Esophagus muscularis mucosa (tissue), 4 donors: ENCODE measurements at regions of chr10 and their contacts with region 1.

Region 1: DNA sequence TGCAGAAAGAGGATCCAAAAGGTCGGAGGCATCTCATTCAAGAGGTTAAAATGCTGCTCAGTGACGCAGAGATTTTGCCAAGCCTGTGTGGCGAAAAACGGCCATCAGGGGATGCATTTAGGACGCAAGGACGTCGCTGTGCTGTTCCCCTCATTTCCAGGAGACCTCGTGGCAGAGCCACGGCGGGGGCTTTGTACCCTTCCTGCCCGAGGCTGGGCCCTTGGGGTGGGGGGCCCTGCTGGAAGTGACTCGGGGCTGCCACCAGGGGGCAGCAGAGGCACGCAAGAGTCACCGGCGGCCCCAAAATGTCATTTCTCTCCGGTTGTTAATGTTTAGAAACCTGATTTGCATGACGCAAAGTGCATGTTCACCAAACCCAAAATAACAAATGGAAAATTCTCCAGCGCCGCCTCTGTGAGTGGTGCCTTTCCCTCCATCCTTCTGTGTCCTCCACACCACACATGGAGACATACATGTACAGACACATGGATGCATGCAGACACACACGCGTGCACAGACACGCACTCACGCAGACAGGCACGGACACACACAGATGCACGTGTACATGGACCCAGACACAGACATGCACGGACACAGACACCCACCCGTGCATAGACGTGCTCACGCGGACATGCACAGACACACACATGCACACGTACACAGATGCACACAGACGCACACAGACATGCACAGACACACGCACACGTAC is 51.0 kb upstream of the NKX6-2 start:
- DNase-seq: no peak
- H3K4me3 ChIP-seq: no peak overlapping the region
- H3K27ac ChIP-seq: no peak overlapping the region
- H3K4me1 ChIP-seq: peaks cover 0 to 12% (median 4%) of the 10 kb centered on the region in 4 donors
- H3K27me3 ChIP-seq: peaks cover 0 to 76% (median 14%) of the 10 kb centered on the region in 4 donors
- CTCF ChIP-seq: peak; percentile 84 to 97 (median 94)
- EP300 ChIP-seq: no peak
- POLR2A ChIP-seq: no peak

Region 2: DNA sequence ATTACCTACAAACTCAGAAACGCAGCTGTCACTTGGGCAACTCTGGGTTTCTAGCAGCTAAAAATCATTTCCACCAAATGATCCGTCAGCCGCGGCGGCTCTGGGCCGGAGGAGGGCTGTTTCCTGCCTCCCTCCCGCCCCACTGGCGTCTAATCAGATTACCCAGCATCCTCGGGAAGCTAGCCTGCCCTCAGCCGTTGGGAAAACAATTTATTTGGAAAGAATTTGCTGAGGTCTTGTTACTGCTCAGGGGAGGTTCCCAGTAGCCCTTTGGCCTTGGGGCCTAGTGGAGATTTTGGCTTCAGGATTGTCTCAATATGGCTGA is 185.8 kb after region 1 on chr10:
- intact Hi-C with region 1: no loop called
- DNase-seq: no peak
- H3K4me3 ChIP-seq: no peak overlapping the region
- H3K27ac ChIP-seq: no peak overlapping the region
- H3K4me1 ChIP-seq: peaks cover 0 to 8% (median 4%) of the 10 kb centered on the region in 4 donors
- H3K27me3 ChIP-seq: peaks cover 0 to 66% (median 0%) of the 10 kb centered on the region in 4 donors
- CTCF ChIP-seq: no peak
- EP300 ChIP-seq: no peak
- POLR2A ChIP-seq: no peak

Region 3: GRCh38 chr10:133124357-133125211 is 287.6 kb after region 1 on chr10:
- intact Hi-C with region 1: loop called (anchors 2 kb)
- DNase-seq: no peak
- H3K4me3 ChIP-seq: no peak overlapping the region
- H3K27ac ChIP-seq: no peak overlapping the region
- H3K4me1 ChIP-seq: peaks cover 0 to 6% (median 3%) of the 10 kb centered on the region in 4 donors
- H3K27me3 ChIP-seq: peaks cover 0 to 59% (median 2%) of the 10 kb centered on the region in 4 donors
- CTCF ChIP-seq: peak in 2 of 3 experiments; percentile 47 to 54
- EP300 ChIP-seq: no peak
- POLR2A ChIP-seq: no peak

Region 4: DNA sequence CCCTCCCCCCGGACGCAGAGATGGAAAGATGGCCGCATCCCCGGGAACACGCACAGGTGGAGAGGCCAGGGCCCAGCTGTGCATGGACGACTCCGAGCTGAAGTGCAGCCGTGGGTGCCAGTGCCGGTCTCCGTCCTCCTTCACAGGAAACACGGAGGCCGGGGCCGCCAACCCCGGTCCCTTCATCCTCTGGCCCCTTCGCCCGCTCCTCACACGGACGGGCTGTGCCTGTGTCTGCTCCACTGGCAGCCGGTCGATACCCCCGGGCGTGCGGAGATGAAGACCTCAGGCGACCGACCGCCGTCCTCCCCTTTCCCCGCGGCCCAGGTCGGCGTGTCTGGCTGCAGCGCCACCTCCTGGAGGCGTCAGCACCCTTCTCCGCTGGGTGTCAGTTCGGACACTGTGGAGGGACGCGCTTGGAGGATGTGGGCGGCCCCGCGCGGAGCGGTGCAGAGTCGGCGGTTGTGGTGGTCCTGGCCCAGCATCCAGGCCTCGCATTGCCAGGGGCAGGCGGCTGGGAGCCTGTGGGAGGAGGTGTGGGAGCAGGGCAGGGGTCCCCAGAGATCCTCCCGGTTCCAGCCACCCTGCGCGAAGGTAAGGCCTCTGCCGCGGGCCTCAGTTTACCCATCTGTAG is 481.6 kb after region 1 on chr10:
- intact Hi-C with region 1: loop called (anchors 5 kb)
- DNase-seq: no peak
- H3K4me3 ChIP-seq: peak overlapping the region; percentile 43 to 55 (median 44)
- H3K27ac ChIP-seq: no peak overlapping the region
- H3K4me1 ChIP-seq: peaks cover 6 to 14% (median 13%) of the 10 kb centered on the region in 4 donors
- H3K27me3 ChIP-seq: peaks cover 0 to 35% (median 2%) of the 10 kb centered on the region in 4 donors
- CTCF ChIP-seq: peak; percentile 50 to 72 (median 61)
- EP300 ChIP-seq: no peak
- POLR2A ChIP-seq: no peak

Region 5: DNA sequence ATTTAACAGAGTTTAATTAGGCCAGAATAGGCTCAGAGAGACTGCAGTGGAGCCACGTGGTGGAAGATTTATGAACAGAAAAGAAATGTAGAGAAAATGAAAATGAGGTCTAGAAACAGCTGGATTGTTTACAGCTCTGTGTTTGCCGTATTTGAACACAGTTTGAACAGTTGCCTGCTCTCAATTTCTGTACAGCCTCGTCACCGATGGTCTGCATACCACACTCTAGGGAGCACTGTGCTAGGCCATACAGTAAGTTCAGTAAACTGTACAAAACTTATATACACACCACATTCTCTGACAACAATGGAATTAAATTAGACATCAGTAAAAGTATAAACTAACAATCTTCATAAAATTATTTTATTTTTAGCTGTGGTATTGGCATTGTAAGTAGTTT is 679.1 kb after region 1 on chr10:
- intact Hi-C with region 1: no loop called
- DNase-seq: no peak
- H3K4me3 ChIP-seq: no peak overlapping the region
- H3K27ac ChIP-seq: no peak overlapping the region
- H3K4me1 ChIP-seq: peaks cover 0 to 14% (median 11%) of the 10 kb centered on the region in 4 donors
- H3K27me3 ChIP-seq: no peaks in the 10 kb centered on the region
- CTCF ChIP-seq: no peak
- EP300 ChIP-seq: no peak
- POLR2A ChIP-seq: no peak